Brain microvascular endothelial cell (primary cell): ENCODE measurements at regions of chr1 and their contacts with region 1.

Region 1: GRCh38 chr1:155117617-155118016 is 10.1 kb upstream of the EFNA1 start:
- DNase-seq: no peak
- H3K4me3 ChIP-seq: no peak overlapping the region
- H3K27ac ChIP-seq: no peak overlapping the region
- H3K27me3 ChIP-seq: peaks cover 11% of the 10 kb centered on the region
- CTCF ChIP-seq: no peak

Region 2: GRCh38 chr1:155167166-155168104 is 49.8 kb after region 1 on chr1:
- in situ Hi-C with region 1: loop called (anchors 10 kb)
- DNase-seq: peak; percentile 77
- H3K4me3 ChIP-seq: peak overlapping the region; percentile 4
- H3K27ac ChIP-seq: no peak overlapping the region
- H3K27me3 ChIP-seq: no peaks in the 10 kb centered on the region
- CTCF ChIP-seq: peak; percentile 94

Region 3: GRCh38 chr1:155669233-155670162 is 551.9 kb after region 1 on chr1:
- in situ Hi-C with region 1: no loop called
- DNase-seq: no peak
- H3K4me3 ChIP-seq: no peak overlapping the region
- H3K27ac ChIP-seq: no peak overlapping the region
- H3K27me3 ChIP-seq: no peaks in the 10 kb centered on the region
- CTCF ChIP-seq: no peak